Activated T-helper 1 cell treated with anti-CD3 and anti-CD28 coated beads, Interleukin-12 subunit alpha, Interleukin-12 subunit beta, Interleukin-2, Interleukin-4 antibody, amounts not matched to agents 30 ng/mL and 10 ng/mL and 1 ng/mL, durations not matched to agents 14 hours and 24 hours and 36 hours (primary cell): ENCODE measurements at regions of chr17 and their contacts with region 1.

Region 1: DNA sequence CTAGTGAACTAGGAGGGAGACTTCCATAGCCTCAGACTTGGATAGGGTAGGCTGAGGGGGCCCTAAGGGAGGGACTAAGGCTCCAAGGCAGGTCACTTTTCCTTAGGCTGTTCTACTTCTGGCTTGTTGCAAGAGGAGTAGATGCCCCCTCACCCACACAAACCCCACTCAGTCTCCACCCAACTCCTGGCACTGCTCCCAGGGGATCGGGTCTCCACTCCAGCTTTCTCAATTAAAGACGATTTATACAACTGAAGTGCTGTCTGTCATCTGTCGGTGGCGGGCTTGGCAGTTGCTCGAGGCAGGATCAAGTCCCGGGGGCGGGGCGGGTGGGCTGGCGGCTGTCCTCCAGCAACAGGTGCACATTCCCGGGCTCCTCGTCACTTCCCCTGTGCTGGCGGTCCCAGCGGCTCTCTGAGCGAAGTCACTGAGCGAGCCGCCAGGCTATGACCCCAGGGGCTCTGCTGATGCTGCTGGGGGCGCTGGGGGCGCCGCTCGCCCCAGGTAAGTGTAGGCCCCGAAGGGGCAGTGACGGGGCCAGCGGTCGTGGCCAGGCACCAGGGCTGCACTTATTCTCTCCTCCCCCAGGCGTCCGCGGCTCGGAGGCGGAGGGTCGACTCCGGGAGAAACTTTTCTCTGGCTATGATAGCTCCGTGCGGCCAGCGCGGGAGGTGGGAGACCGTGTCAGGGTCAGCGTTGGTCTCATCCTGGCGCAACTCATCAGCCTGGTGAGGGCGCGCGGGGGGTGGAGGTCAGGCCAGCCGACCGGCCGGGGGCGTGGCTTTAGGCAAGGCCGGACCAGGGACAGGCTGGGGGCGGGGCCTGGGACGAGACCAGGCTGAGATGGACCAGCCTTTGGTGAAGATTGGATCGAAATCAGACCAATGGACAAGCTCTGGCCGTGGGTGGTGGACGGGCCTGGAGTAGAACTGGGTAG is at the start of gene CHRNB1:
- DNase-seq: no peak
- H3K4me3 Mint-ChIP-seq: peak within 1 kb of the TSS; percentile 79
- H3K27ac Mint-ChIP-seq: peak within 1 kb of the TSS; percentile 34
- H3K4me1 Mint-ChIP-seq: peaks cover 20% of the 10 kb centered on the region
- H3K27me3 Mint-ChIP-seq: peaks cover 19% of the 10 kb centered on the region
- total RNA-seq, gene CHRNB1: 6.6 and 7.0 TPM in 2 replicates

Region 2: GRCh38 chr17:7403977-7404736 is 40.8 kb before region 1 on chr17 and contains the start of gene TMEM256:
- intact Hi-C with region 1: no loop called
- DNase-seq: peak; percentile 94
- H3K4me3 Mint-ChIP-seq: peak within 1 kb of the TSS; percentile 92
- H3K27ac Mint-ChIP-seq: peak within 1 kb of the TSS; percentile 95
- H3K4me1 Mint-ChIP-seq: peaks cover 13% of the 10 kb centered on the region
- H3K27me3 Mint-ChIP-seq: peaks cover 21% of the 10 kb centered on the region
- total RNA-seq, gene TMEM256: 53.5 and 54.7 TPM in 2 replicates

Region 3: GRCh38 chr17:7454980-7455379 is 10.0 kb after region 1 on chr17:
- intact Hi-C with region 1: loop called (anchors 1 kb)
- DNase-seq: no peak
- H3K4me3 Mint-ChIP-seq: peak overlapping the region; percentile 87
- H3K27ac Mint-ChIP-seq: peak overlapping the region; percentile 88
- H3K4me1 Mint-ChIP-seq: peaks cover 31% of the 10 kb centered on the region
- H3K27me3 Mint-ChIP-seq: no peaks in the 10 kb centered on the region

Region 4: DNA sequence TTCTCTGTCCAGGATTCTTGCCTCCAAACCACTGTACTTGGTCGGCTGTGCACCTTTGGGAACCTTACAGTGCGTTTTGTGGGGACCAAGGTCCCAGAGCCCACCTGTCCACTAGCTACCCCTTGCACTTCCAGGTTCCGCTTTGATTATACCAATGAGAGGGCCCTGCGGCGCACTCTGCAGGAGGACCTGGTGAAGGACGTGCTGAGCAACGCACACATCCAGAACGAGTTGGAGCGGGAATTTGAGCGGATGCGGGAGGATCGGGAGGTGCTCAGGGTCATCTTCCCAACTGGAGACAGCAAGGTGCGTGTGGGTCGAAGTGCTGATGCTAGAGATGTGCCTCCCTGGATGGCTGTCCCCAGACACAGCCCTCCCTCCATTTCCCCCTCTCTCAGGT is 58.0 kb after region 1 on chr17:
- intact Hi-C with region 1: no loop called
- DNase-seq: no peak
- H3K4me3 Mint-ChIP-seq: no peak overlapping the region
- H3K27ac Mint-ChIP-seq: no peak overlapping the region
- H3K4me1 Mint-ChIP-seq: no peaks in the 10 kb centered on the region
- H3K27me3 Mint-ChIP-seq: no peaks in the 10 kb centered on the region